ENCODE measurements at regions of chr3 and their contacts with region 1.

Region 1: DNA sequence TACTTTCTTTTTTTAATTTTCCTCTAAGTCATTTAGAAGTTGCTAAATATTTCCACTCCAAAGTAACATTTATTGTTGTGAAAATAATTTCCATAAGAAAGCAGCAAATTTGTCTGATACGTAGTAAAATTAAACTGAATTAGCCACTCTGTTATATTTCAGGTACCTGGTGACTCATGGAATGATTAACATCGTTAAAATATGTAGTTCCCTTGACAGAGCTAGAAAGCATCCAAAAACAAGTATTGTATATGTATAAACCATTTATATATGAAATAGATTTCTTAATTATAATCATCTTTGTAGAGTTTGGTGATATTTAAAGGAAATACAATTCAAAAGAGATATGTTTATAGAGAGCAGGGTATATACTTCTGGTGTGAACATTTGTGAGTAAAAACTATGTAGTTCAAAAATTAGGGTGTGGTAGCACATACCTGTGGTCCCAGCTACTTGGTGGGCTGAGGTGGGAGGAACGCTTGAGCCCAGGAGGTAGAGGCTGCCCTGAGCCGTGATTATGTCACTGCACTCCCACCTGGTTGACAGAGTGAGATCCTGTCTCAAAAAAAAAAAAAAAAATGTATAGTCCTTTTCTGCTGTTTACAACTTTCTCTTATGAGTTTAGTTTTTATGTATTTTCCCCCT is 36.6 kb downstream of the ATP11B start:
- DNase-seq: no peak
- ATAC-seq: no peak
- H3K4me3 Mint-ChIP-seq: no peak overlapping the region
- H3K27ac Mint-ChIP-seq: no peak overlapping the region
- H3K4me1 Mint-ChIP-seq: peaks cover 5% of the 10 kb centered on the region
- H3K27me3 Mint-ChIP-seq: no peaks in the 10 kb centered on the region
- CTCF ChIP-seq: no peak

Region 2: GRCh38 chr3:182808041-182808770 is 21.7 kb before region 1 on chr3:
- CTCF ChIA-PET with region 1: no interaction called
- POLR2A ChIA-PET with region 1: no interaction called
- intact Hi-C with region 1: loop called (anchors 2 kb)
- DNase-seq: no peak
- ATAC-seq: no peak
- H3K4me3 Mint-ChIP-seq: no peak overlapping the region
- H3K27ac Mint-ChIP-seq: no peak overlapping the region
- H3K4me1 Mint-ChIP-seq: peaks cover 33% of the 10 kb centered on the region
- H3K27me3 Mint-ChIP-seq: no peaks in the 10 kb centered on the region
- CTCF ChIP-seq: no peak

Region 3: GRCh38 chr3:182909318-182910040 is 79.6 kb after region 1 on chr3:
- CTCF ChIA-PET with region 1: no interaction called
- POLR2A ChIA-PET with region 1: no interaction called
- intact Hi-C with region 1: no loop called
- DNase-seq: no peak
- ATAC-seq: no peak
- H3K4me3 Mint-ChIP-seq: no peak overlapping the region
- H3K27ac Mint-ChIP-seq: no peak overlapping the region
- H3K4me1 Mint-ChIP-seq: peaks cover 4% of the 10 kb centered on the region
- H3K27me3 Mint-ChIP-seq: no peaks in the 10 kb centered on the region
- CTCF ChIP-seq: no peak

Measured in activated B cell treated with CpG ODN at 0.5 μM for 24 hours (primary cell).